Activated CD4-positive, alpha-beta T cell treated with anti-CD3 and anti-CD28 coated beads, Interleukin-2, amount 10 ng/mL, durations not matched to agents 24 days and 14 days (primary cell): ENCODE measurements at regions of chr22 and their contacts with region 1.

Region 1: GRCh38 chr22:19210188-19210587 is 31.7 kb upstream of the SLC25A1 start:
- DNase-seq: no peak
- H3K4me3 Mint-ChIP-seq: no peak overlapping the region
- H3K27ac Mint-ChIP-seq: no peak overlapping the region
- H3K4me1 Mint-ChIP-seq: no peaks in the 10 kb centered on the region
- H3K27me3 Mint-ChIP-seq: peaks cover 20% of the 10 kb centered on the region

Region 2: DNA sequence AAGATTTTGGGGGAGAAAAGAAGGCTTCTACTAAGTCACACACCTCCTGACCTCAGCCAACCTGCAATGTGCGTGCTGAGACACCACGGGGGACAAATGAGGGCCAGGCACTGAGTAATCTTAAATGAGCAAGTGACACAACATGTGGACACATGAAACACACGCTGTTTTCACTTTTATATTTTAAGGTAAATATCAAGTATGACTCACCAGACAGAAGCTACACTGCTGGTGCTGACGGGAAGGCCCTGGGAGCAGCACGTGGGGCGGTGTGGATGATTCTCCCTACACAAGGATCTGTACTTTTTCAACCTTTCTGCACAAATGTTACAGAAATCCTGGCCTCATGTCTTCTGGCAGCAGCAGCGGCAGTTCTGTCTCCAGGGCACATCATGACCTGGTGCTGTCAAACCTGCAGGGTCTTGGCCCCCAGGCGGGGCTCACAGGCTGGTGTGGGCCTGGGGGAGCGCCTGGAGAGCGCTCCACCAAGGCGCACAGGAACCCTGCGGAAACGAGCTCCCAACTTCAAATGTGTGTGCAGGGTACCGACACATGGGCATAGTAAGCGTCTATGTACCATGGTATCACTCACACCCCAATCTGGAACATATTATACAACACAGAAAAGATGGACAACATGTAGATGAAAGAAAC is 149.7 kb before region 1 on chr22:
- intact Hi-C with region 1: no loop called
- DNase-seq: no peak
- H3K4me3 Mint-ChIP-seq: no peak overlapping the region
- H3K27ac Mint-ChIP-seq: no peak overlapping the region
- H3K4me1 Mint-ChIP-seq: no peaks in the 10 kb centered on the region
- H3K27me3 Mint-ChIP-seq: no peaks in the 10 kb centered on the region

Region 3: DNA sequence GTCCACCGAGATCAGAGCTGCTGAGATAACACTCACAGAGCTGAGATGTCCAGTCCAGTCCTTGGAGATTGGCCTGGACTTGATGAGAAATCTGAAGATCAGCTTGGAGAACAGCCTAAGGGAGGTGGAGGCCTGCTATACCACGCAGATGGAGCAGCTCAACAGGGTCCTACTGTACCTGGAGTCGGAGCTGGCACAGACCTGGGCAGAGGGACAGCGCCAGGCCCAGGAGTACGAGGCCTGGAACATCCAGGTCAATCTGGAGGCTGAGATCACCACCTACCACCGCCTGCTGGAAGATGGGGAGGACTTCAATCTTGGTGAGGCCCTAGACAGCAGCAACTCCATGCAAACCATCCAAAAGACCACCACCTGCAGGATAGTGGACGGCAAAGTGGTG is 48.2 kb after region 1 on chr22:
- intact Hi-C with region 1: loop called (anchors 2 kb)
- DNase-seq: no peak
- H3K4me3 Mint-ChIP-seq: no peak overlapping the region
- H3K27ac Mint-ChIP-seq: no peak overlapping the region
- H3K4me1 Mint-ChIP-seq: peaks cover 10% of the 10 kb centered on the region
- H3K27me3 Mint-ChIP-seq: no peaks in the 10 kb centered on the region